Common myeloid progenitor, CD34-positive (primary cell): ENCODE measurements at regions of chr7 and their contacts with region 1.

Region 1: DNA sequence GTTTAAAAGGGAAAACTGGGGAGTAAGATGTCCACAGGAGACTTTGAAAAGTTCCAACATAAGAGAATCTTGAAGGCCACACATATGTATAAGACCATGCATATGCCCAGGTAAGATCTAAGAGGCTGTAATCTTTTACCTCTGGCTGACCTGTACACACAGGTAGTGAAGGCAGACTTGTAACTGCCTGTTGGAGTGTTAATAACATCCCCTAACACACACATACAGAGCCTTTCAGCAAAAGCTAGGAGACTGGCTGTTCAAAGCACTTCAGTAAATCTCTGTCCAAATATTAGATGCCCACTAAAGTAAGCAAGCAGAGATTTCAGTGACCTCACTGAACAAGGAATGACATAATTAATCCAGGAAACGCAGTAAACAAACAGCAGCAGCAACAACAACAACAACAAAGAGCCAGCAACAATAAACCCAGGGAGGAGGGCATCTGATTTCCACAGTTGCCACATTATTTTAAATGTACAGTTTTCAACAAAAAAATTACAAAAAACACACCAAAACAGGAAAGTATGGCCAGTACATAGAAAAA is 15.0 kb downstream of the CYP51A1 start:
- DNase-seq: no peak
- H3K4me3 ChIP-seq: no peak overlapping the region
- H3K27ac ChIP-seq: no peak overlapping the region
- H3K4me1 ChIP-seq: no peaks in the 10 kb centered on the region
- H3K27me3 ChIP-seq: no peaks in the 10 kb centered on the region

Region 2: GRCh38 chr7:92100534-92100933 is 18.8 kb before region 1 on chr7:
- CTCF ChIA-PET with region 1: no interaction called
- POLR2A ChIA-PET with region 1: no interaction called
- DNase-seq: no peak
- H3K4me3 ChIP-seq: no peak overlapping the region
- H3K27ac ChIP-seq: no peak overlapping the region
- H3K4me1 ChIP-seq: no peaks in the 10 kb centered on the region
- H3K27me3 ChIP-seq: no peaks in the 10 kb centered on the region

Region 3: DNA sequence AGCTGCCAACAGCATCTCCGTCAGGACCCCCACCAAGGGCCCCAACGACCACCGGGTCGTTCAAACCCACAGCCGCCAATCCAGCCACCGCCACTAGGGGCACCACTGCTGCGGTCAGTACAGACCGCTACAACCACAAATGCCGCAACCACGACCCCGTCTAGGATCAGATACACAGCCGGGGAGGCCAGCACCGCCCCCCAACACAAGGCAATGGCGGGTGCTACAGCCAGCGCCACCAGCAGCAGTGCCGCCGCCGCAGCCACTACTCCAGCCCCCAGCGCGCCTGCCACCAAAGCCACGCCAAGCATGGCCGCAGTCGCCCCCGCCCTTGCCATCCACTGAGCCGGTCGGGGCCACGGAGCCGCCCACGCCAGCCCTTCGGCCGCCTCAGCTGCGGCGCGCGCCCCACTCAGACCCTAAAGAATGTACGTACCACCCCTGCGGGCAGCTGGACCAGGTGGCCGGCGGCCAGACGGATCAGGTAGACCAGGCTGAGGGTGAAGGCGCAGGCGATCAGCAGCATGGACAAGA is 14.5 kb after region 1 on chr7:
- CTCF ChIA-PET with region 1: interaction called, 10 read pairs
- POLR2A ChIA-PET with region 1: interaction called, 3 read pairs
- DNase-seq: peak; percentile 79 to 91 (median 88)
- H3K4me3 ChIP-seq: peak overlapping the region; percentile 60 to 94 (median 80)
- H3K27ac ChIP-seq: peak overlapping the region; percentile 94 to 98
- H3K4me1 ChIP-seq: peaks cover 3 to 30% (median 16%) of the 10 kb centered on the region in 4 experiments
- H3K27me3 ChIP-seq: no peaks in the 10 kb centered on the region